ENCODE measurements at regions of chr22 and their contacts with region 1.

Region 1: GRCh38 chr22:24423519-24424000 is 3.8 kb upstream of the ADORA2A start:
- DNase-seq: peak; percentile 72
- H3K4me3 ChIP-seq: peak overlapping the region; percentile 16 to 55 (median 47)
- H3K27ac ChIP-seq: no peak overlapping the region
- H3K4me1 ChIP-seq: peaks cover 0 to 17% (median 15%) of the 10 kb centered on the region in 4 donors
- H3K27me3 ChIP-seq: peaks cover 4 to 43% (median 20%) of the 10 kb centered on the region in 3 donors
- CTCF ChIP-seq: peak in 2 of 4 experiments; percentile 53 to 91
- EP300 ChIP-seq: no peak
- POLR2A ChIP-seq: no peak

Region 2: GRCh38 chr22:24011735-24012068 is 411.9 kb before region 1 on chr22:
- intact Hi-C with region 1: no loop called
- DNase-seq: no peak
- H3K4me3 ChIP-seq: peak overlapping the region; percentile 58 to 98 (median 74)
- H3K27ac ChIP-seq: peak overlapping the region; percentile 78 to 89 (median 82)
- H3K4me1 ChIP-seq: peaks cover 0 to 20% (median 15%) of the 10 kb centered on the region in 4 donors
- H3K27me3 ChIP-seq: no peaks in the 10 kb centered on the region
- CTCF ChIP-seq: no peak
- EP300 ChIP-seq: no peak
- POLR2A ChIP-seq: no peak

Region 3: DNA sequence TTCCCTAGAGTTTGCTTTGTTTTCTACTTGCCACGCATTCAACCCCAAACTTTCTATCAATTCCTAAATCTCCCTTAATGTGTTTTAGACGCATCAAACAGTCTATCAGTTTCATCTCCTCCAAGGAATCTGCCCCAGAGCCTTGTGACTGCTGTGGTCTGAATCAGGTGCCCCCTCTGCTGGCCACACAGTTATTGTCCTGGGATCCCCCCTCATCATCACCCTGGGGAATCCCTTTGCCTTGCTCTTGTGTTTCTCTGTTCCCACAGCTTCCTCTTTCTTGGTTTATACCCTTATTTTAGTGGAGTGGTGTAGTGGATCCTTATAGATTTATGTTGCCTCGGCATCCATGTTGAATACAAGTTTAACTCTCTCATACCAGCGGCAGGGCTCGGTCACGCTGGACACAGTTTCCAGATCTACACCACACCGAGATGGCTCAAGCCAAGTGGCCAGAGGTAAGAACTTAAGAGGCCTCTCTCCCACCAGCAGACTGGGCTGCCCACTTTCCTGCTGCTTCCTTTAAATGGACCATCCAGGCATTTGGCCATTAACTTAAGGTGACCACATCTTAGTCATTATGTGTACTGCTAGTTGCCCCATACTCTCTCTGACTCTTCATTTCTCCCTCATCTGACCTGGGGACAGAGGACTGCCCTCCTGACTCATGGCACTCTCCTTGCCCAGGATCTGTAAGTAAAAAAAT is 79.7 kb after region 1 on chr22:
- intact Hi-C with region 1: loop called (anchors 2 kb)
- DNase-seq: no peak
- H3K4me3 ChIP-seq: no peak overlapping the region
- H3K27ac ChIP-seq: no peak overlapping the region
- H3K4me1 ChIP-seq: no peaks in the 10 kb centered on the region
- H3K27me3 ChIP-seq: no peaks in the 10 kb centered on the region
- CTCF ChIP-seq: peak; percentile 16 to 55 (median 44)
- EP300 ChIP-seq: no peak
- POLR2A ChIP-seq: no peak

Region 4: GRCh38 chr22:24525416-24526037 is 102.0 kb after region 1 on chr22:
- intact Hi-C with region 1: loop called (anchors 5 kb)
- DNase-seq: peak; percentile 80
- H3K4me3 ChIP-seq: no peak overlapping the region
- H3K27ac ChIP-seq: no peak overlapping the region
- H3K4me1 ChIP-seq: peaks cover 0 to 8% (median 4%) of the 10 kb centered on the region in 4 donors
- H3K27me3 ChIP-seq: no peaks in the 10 kb centered on the region
- CTCF ChIP-seq: peak; percentile 50 to 84 (median 72)
- EP300 ChIP-seq: no peak
- POLR2A ChIP-seq: no peak

Region 5: GRCh38 chr22:24758164-24758799 is 334.7 kb after region 1 on chr22:
- intact Hi-C with region 1: loop called (anchors 10 kb)
- DNase-seq: peak; percentile 67
- H3K4me3 ChIP-seq: no peak overlapping the region
- H3K27ac ChIP-seq: no peak overlapping the region
- H3K4me1 ChIP-seq: no peaks in the 10 kb centered on the region
- H3K27me3 ChIP-seq: peaks cover 0 to 8% (median 0%) of the 10 kb centered on the region in 3 donors
- CTCF ChIP-seq: peak in 3 of 4 experiments; percentile 56 to 91 (median 69)
- EP300 ChIP-seq: no peak
- POLR2A ChIP-seq: no peak